Right cardiac atrium (tissue), 5 donors: ENCODE measurements at regions of chr1 and their contacts with region 1.

Region 1: GRCh38 chr1:63917571-63918417 is 144.0 kb downstream of the ROR1 start:
- DNase-seq: no peak
- ATAC-seq: no peak
- H3K4me3 ChIP-seq: no peak overlapping the region
- H3K27ac ChIP-seq: no peak overlapping the region
- H3K4me1 ChIP-seq: peaks cover 10% of the 10 kb centered on the region
- H3K27me3 ChIP-seq: no peaks in the 10 kb centered on the region

Region 2: DNA sequence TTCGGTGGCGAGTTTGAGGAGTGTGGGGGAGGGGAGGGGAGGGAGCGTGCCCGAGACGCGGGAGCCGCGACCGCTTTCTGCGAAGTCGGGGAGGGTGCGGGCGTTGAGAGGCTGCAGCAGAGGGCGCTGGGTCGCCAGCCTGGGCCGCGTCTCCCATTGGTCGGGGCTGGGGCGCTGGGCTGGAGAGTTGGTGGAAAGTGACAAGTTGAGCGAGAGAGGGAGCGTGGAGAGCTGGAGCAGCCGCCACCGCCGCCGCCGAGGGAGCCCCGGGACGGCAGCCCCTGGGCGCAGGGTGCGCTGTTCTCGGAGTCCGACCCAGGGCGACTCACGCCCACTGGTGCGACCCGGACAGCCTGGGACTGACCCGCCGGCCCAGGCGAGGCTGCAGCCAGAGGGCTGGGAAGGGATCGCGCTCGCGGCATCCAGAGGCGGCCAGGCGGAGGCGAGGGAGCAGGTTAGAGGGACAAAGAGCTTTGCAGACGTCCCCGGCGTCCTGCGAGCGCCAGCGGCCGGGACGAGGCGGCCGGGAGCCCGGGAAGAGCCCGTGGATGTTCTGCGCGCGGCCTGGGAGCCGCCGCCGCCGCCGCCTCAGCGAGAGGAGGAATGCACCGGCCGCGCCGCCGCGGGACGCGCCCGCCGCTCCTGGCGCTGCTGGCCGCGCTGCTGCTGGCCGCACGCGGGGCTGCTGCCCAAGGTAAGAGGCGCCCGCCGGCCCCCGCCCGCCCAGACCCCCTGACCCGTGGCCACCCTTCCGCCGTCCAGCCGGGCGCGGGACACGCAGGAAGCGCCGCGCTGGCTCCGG is 143.8 kb before region 1 on chr1 and contains the start of gene ROR1:
- intact Hi-C with region 1: loop called in 1 of 4 experiments (anchors 10 kb)
- DNase-seq: peak; percentile 88 to 95 (median 94)
- ATAC-seq: peak; percentile 98
- H3K4me3 ChIP-seq: peak within 1 kb of the TSS; percentile 80
- H3K27ac ChIP-seq: peak within 1 kb of the TSS; percentile 74
- H3K4me1 ChIP-seq: no peaks in the 10 kb centered on the region
- H3K27me3 ChIP-seq: no peaks in the 10 kb centered on the region
- total RNA-seq, gene ROR1: 10.6 to 32.5 (median 13.5) TPM

Region 3: GRCh38 chr1:63984257-63984929 is 66.6 kb after region 1 on chr1:
- intact Hi-C with region 1: no loop called
- DNase-seq: no peak
- ATAC-seq: no peak
- H3K4me3 ChIP-seq: no peak overlapping the region
- H3K27ac ChIP-seq: no peak overlapping the region
- H3K4me1 ChIP-seq: peaks cover 5% of the 10 kb centered on the region
- H3K27me3 ChIP-seq: no peaks in the 10 kb centered on the region

Region 4: DNA sequence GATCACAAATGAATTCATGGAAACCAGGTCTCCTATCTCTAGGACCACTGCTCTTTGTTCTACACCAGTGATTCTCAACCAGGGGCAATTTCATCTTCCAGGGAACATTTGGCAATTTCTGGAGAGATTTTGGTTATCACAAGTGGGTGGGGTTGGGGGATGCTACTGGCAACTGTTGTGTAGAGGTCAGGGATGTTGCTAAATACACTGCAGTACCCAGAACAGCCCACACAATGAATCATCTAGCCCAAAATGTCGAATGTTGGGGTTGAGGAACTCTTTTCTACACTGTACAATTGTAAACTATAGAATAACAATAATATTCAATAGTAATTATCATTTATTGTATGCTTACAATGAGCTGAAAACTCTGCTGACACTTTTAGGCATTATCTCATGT is 230.0 kb after region 1 on chr1:
- intact Hi-C with region 1: loop called in 1 of 4 experiments (anchors 10 kb)
- DNase-seq: no peak
- ATAC-seq: peak in 1 of 2 donors; percentile 26
- H3K4me3 ChIP-seq: no peak overlapping the region
- H3K27ac ChIP-seq: no peak overlapping the region
- H3K4me1 ChIP-seq: no peaks in the 10 kb centered on the region
- H3K27me3 ChIP-seq: no peaks in the 10 kb centered on the region